AG04449 (cell line): ENCODE measurements at regions of chr6 and their contacts with region 1.

Region 1: GRCh38 chr6:159633196-159633595 is 59.8 kb downstream of the SOD2 start:
- DNase-seq: no peak
- H3K4me3 ChIP-seq: no peak overlapping the region
- CTCF ChIP-seq: peak; percentile 46

Region 2: GRCh38 chr6:159646733-159647132 is 13.5 kb after region 1 on chr6:
- CTCF ChIA-PET with region 1: interaction called, 20 read pairs
- POLR2A ChIA-PET with region 1: no interaction called
- DNase-seq: no peak
- H3K4me3 ChIP-seq: no peak overlapping the region
- CTCF ChIP-seq: no peak

Region 3: GRCh38 chr6:159981403-159982245 is 348.4 kb after region 1 on chr6:
- CTCF ChIA-PET with region 1: no interaction called
- POLR2A ChIA-PET with region 1: no interaction called
- DNase-seq: no peak
- H3K4me3 ChIP-seq: no peak overlapping the region
- CTCF ChIP-seq: no peak

Region 4: DNA sequence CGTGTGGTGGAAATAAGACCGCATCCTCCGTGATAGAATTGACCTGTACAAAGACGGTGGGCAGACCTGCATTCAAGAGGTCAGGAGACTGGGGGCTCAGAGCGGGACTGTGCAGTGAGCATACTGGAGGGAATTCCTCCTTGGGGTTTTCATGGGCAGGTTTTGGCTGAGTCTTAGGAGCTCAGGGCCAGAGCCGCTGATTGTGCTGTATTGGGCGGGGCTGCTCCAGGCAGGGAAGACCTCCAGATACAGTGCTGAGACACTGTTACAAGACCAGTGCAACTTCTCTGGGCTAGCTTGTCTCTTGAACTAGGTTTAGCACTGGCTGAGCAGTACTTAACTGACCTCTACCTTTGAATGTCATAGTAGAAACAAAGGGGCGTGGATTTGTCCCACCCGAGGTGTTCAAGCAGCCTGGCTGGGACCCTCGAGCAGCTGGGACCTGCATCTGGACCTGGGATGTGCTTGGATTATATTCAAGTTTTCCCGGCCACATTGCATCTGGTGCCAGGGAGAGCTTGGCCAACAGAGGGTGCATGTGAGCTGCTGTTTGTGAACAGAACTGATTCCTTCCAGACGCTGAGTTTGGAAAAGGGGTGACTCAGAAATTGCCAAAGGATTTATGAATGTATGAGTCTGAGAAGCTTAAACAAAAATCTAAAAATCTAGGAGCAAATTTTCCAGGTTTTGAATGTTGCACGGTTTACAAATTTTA is 455.0 kb after region 1 on chr6:
- CTCF ChIA-PET with region 1: no interaction called
- POLR2A ChIA-PET with region 1: no interaction called
- DNase-seq: peak; percentile 50
- H3K4me3 ChIP-seq: no peak overlapping the region
- CTCF ChIP-seq: peak; percentile 86